Activated CD4-positive, alpha-beta memory T cell treated with anti-CD3 and anti-CD28 coated beads for 36 hours (primary cell): ENCODE measurements at regions of chr4 and their contacts with region 1.

Region 1: DNA sequence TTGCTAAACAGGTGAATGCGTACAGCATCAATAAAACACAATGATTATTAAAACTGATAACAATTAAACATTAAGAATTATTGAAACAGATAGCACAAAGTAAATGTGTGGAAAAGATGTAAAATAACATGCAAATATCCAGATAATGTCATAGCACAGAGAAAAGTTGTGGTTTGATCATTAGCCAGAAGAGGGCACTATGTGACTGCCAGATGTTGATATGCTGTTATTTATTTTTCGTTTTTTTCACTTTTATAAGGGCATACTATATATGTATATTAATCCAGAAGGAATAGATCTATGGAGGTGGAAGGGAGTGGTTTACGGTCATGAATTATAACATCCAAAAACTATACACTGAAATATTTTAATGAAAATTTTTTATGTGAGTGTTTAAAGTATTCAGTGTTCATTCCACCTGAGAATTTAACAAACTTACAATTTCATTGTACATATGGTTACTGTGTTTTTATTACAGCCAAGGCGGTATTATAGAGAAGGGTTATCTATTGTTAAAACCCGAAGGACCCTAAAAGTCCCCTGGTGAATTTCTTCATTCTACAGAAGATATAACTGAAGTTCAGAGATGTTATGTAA is 211.9 kb upstream of the UGT8 start:
- DNase-seq: no peak
- H3K4me3 Mint-ChIP-seq: no peak overlapping the region
- H3K27ac Mint-ChIP-seq: no peak overlapping the region
- H3K4me1 Mint-ChIP-seq: no peaks in the 10 kb centered on the region
- H3K27me3 Mint-ChIP-seq: peaks cover 10% of the 10 kb centered on the region

Region 2: GRCh38 chr4:114659386-114660008 is 272.8 kb after region 1 on chr4:
- CTCF ChIA-PET with region 1: interaction called, 16 read pairs
- POLR2A ChIA-PET with region 1: no interaction called
- intact Hi-C with region 1: loop called (anchors 1 kb)
- DNase-seq: peak; percentile 50
- H3K4me3 Mint-ChIP-seq: no peak overlapping the region
- H3K27ac Mint-ChIP-seq: no peak overlapping the region
- H3K4me1 Mint-ChIP-seq: no peaks in the 10 kb centered on the region
- H3K27me3 Mint-ChIP-seq: peaks cover 14% of the 10 kb centered on the region

Region 3: DNA sequence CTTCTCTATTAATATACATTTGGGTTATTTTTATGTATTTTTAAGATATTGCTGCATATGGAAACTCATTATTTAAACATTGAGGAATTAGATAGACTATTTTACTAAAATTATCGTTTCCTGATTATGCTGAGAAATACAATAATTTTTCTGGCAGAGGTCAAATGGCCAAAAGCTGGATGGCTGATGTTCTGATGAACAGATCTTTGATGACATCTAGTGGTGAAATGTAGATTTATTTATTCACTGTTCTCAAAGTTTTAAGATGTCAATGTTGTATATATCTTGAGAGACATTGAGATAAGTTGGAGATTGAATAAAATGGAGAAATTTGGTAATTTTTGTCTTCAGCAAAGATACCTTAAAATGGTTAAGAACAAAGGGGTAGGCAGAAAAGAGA is 308.0 kb after region 1 on chr4:
- CTCF ChIA-PET with region 1: interaction called, 4 read pairs
- POLR2A ChIA-PET with region 1: no interaction called
- intact Hi-C with region 1: loop called (anchors 1 kb)
- DNase-seq: no peak
- H3K4me3 Mint-ChIP-seq: no peak overlapping the region
- H3K27ac Mint-ChIP-seq: no peak overlapping the region
- H3K4me1 Mint-ChIP-seq: no peaks in the 10 kb centered on the region
- H3K27me3 Mint-ChIP-seq: peaks cover 3% of the 10 kb centered on the region